ENCODE measurements at regions of chr1 and their contacts with region 1.

Region 1: DNA sequence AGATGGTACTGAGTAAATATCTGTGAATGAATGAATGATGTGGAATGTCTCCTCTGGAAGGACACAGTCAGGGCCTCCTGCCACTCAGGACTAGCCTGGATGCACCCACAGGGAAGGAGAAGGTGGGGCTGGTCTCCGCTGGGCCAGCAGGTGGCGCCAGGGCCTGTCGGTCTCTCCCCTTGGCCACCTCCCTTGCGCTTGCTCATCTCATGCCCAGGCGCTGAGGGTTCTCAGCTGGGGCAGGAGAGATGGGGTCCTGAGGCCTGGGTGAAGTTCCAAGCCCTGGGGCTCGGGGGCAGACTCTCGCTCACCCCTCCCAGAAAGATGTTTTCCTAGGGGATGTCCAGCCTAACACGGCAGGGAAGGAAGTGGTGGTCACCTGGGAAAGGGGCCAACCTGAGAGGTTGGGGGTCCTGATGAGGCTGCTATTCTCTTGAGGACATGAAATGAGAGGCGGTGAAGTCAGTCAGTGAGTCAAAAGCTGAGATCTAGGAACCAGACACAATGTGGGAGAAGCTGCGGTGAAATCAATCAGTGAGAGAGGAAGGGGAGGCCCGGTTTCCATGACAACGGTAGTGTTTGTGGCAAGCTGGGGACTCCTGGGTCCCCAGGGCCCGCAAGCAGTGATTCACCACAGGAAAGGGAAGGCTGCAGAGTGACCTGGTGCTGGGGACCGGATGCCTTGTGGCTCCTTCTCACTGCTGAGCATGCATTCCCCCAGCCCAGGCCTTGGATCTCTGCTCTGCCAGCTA is 14.6 kb upstream of the MEX3A start:
- DNase-seq: peak; percentile 92

Region 2: DNA sequence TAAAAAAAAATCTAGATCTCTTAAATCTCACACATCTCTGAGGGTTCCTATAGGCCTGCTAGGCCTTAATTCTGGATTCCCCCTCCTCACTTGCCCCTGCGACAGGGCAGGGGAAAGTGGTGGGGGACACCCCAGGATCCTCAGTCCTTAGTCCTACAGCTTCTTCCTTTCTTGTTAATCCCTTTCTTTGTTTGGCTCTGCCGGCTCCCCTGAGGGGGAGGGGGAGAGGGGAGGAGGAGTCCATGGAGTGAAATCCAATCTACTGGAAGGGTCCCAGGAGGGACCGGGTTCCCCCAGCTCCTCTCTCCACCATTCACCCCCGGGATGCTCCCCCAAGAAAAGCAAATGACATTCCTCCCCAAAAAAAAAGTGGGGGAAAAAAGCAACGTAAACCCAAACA is 23.1 kb before region 1 on chr1:
- CTCF ChIA-PET with region 1: no interaction called
- POLR2A ChIA-PET with region 1: no interaction called
- DNase-seq: no peak

Region 3: GRCh38 chr1:156114101-156114916 is 17.5 kb after region 1 on chr1 and contains the start of gene LMNA:
- CTCF ChIA-PET with region 1: interaction called, 50 read pairs
- POLR2A ChIA-PET with region 1: interaction called, 60 read pairs
- DNase-seq: peak; percentile 87

Measured in HEK293T (cell line).